Psoas muscle (tissue), 8 donors: ENCODE measurements at regions of chr3 and their contacts with region 1.

Region 1: DNA sequence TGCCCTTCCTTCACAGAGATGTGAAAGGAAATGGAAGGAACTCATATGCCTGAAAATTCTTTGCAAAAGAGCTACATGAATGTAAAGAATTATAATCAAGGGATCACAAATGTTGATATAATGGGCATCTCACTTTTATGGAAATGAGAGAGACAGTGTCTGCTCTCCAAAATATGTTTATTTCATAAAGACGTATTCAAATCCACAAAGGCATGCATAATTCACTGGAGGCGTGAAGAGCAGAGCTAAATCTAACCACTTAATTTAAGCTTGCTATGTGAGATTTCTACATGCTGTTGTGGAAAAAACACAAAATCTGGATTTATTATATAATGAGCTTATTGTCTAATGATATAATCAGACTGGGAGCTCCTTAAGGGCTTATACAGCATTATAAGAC is 469.1 kb downstream of the RAP2B start:
- DNase-seq: no peak
- ATAC-seq: no peak
- H3K4me3 ChIP-seq: no peak overlapping the region
- H3K27ac ChIP-seq: no peak overlapping the region
- H3K4me1 ChIP-seq: no peaks in the 10 kb centered on the region
- H3K27me3 ChIP-seq: peaks cover 0 to 1% (median 0%) of the 10 kb centered on the region in 3 donors
- CTCF ChIP-seq: no peak

Region 2: GRCh38 chr3:153614563-153614962 is 16.5 kb before region 1 on chr3:
- intact Hi-C with region 1: loop called in 1 of 2 experiments (anchors 2 kb)
- DNase-seq: no peak
- ATAC-seq: no peak
- H3K4me3 ChIP-seq: no peak overlapping the region
- H3K27ac ChIP-seq: no peak overlapping the region
- H3K4me1 ChIP-seq: no peaks in the 10 kb centered on the region
- H3K27me3 ChIP-seq: no peaks in the 10 kb centered on the region
- CTCF ChIP-seq: no peak